Caco-2 (cell line): ENCODE measurements at regions of chr2 and their contacts with region 1.

Region 1: GRCh38 chr2:123771928-123772632 is 253.0 kb upstream of the CNTNAP5 start:
- DNase-seq: no peak
- H3K4me3 ChIP-seq: no peak overlapping the region
- H3K4me3 Mint-ChIP-seq: no peak overlapping the region
- H3K27ac Mint-ChIP-seq: no peak overlapping the region
- H3K4me1 ChIP-seq: no peaks in the 10 kb centered on the region
- H3K4me1 Mint-ChIP-seq: no peaks in the 10 kb centered on the region
- H3K27me3 ChIP-seq: no peaks in the 10 kb centered on the region
- H3K27me3 Mint-ChIP-seq: no peaks in the 10 kb centered on the region
- CTCF ChIP-seq: no peak

Region 2: GRCh38 chr2:123738643-123739042 is 33.4 kb before region 1 on chr2:
- CTCF ChIA-PET with region 1: no interaction called
- POLR2A ChIA-PET with region 1: no interaction called
- intact Hi-C with region 1: no loop called
- DNase-seq: no peak
- H3K4me3 ChIP-seq: no peak overlapping the region
- H3K4me3 Mint-ChIP-seq: no peak overlapping the region
- H3K27ac Mint-ChIP-seq: no peak overlapping the region
- H3K4me1 ChIP-seq: no peaks in the 10 kb centered on the region
- H3K4me1 Mint-ChIP-seq: no peaks in the 10 kb centered on the region
- H3K27me3 ChIP-seq: no peaks in the 10 kb centered on the region
- H3K27me3 Mint-ChIP-seq: no peaks in the 10 kb centered on the region
- CTCF ChIP-seq: no peak

Region 3: GRCh38 chr2:124034265-124034664 is 262.2 kb after region 1 on chr2:
- CTCF ChIA-PET with region 1: interaction called, 10 read pairs
- POLR2A ChIA-PET with region 1: no interaction called
- intact Hi-C with region 1: no loop called
- DNase-seq: no peak
- H3K4me3 ChIP-seq: no peak overlapping the region
- H3K4me3 Mint-ChIP-seq: no peak overlapping the region
- H3K27ac Mint-ChIP-seq: no peak overlapping the region
- H3K4me1 ChIP-seq: no peaks in the 10 kb centered on the region
- H3K4me1 Mint-ChIP-seq: no peaks in the 10 kb centered on the region
- H3K27me3 ChIP-seq: no peaks in the 10 kb centered on the region
- H3K27me3 Mint-ChIP-seq: no peaks in the 10 kb centered on the region
- CTCF ChIP-seq: no peak